Caco-2 (cell line): ENCODE measurements at regions of chr11 and their contacts with region 1.

Region 1: GRCh38 chr11:124793466-124794278 is 6.5 kb downstream of the MSANTD2 start:
- DNase-seq: peak in 1 of 2 experiments; percentile 79
- H3K4me3 ChIP-seq: no peak overlapping the region
- H3K4me3 Mint-ChIP-seq: no peak overlapping the region
- H3K27ac Mint-ChIP-seq: no peak overlapping the region
- H3K4me1 ChIP-seq: peaks cover 5% of the 10 kb centered on the region; the same call in 1 of the 2 replicates
- H3K4me1 Mint-ChIP-seq: peaks cover 24% of the 10 kb centered on the region
- H3K27me3 ChIP-seq: no peaks in the 10 kb centered on the region
- H3K27me3 Mint-ChIP-seq: no peaks in the 10 kb centered on the region
- CTCF ChIP-seq: peak; percentile 85 to 94

Region 2: DNA sequence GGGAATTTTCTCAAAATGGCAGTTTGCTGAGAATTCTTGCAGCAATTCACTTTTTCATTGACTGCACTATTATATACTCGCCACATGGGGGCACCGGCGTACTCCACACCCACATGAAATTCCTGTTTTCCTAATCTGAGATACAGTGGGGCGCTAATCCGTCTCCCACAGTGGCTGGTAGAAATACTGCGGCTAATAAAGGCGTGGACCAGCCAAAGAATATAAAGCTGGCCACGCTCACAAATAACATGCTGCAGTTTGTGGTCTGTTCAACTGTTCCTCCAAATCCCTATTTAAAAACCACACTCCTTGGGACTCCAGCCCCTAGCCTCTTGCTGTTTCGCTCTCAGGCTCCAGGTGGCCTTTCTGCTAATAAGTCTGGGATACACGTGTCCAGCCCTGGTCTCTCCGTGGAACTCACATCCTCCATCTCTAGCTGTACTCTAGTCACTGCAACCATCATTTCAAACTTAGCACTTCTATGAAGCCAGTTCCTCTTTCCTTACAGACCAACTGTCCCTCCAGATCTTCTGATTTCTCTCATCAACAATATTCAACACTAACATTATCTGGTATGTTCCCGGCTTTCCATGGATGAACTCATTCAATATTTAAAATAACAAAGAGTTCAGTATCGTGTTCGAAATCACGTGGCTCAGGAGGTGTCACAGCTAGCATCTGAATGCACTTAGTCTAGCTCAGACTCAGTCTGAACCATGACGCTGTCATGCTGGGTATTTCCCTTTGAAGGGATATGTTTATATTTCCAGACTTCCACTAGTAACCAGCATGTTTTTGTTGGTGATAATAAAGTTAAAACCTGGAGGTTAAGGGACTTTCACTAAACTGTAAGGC is 149.0 kb before region 1 on chr11:
- CTCF ChIA-PET with region 1: interaction called, 3 read pairs
- POLR2A ChIA-PET with region 1: no interaction called
- intact Hi-C with region 1: loop called (anchors 1 kb)
- DNase-seq: peak; percentile 77 to 79
- H3K4me3 ChIP-seq: 0 out of 2 replicates have a peak overlapping the region, but pooled peaks have one; percentile 1
- H3K4me3 Mint-ChIP-seq: peak overlapping the region; percentile 54
- H3K27ac Mint-ChIP-seq: no peak overlapping the region
- H3K4me1 ChIP-seq: no peaks in the 10 kb centered on the region
- H3K4me1 Mint-ChIP-seq: no peaks in the 10 kb centered on the region
- H3K27me3 ChIP-seq: no peaks in the 10 kb centered on the region
- H3K27me3 Mint-ChIP-seq: no peaks in the 10 kb centered on the region
- CTCF ChIP-seq: peak; percentile 92 to 99

Region 3: GRCh38 chr11:124717786-124718651 is 75.7 kb before region 1 on chr11:
- CTCF ChIA-PET with region 1: no interaction called
- POLR2A ChIA-PET with region 1: no interaction called
- intact Hi-C with region 1: no loop called
- DNase-seq: peak in 1 of 2 experiments; percentile 37
- H3K4me3 ChIP-seq: peak overlapping the region; percentile 36
- H3K4me3 Mint-ChIP-seq: peak overlapping the region; percentile 71
- H3K27ac Mint-ChIP-seq: no peak overlapping the region
- H3K4me1 ChIP-seq: peaks cover 4% of the 10 kb centered on the region; the same call in 1 of the 2 replicates
- H3K4me1 Mint-ChIP-seq: no peaks in the 10 kb centered on the region
- H3K27me3 ChIP-seq: peaks cover 6% of the 10 kb centered on the region
- H3K27me3 Mint-ChIP-seq: peaks cover 35% of the 10 kb centered on the region
- CTCF ChIP-seq: no peak

Region 4: DNA sequence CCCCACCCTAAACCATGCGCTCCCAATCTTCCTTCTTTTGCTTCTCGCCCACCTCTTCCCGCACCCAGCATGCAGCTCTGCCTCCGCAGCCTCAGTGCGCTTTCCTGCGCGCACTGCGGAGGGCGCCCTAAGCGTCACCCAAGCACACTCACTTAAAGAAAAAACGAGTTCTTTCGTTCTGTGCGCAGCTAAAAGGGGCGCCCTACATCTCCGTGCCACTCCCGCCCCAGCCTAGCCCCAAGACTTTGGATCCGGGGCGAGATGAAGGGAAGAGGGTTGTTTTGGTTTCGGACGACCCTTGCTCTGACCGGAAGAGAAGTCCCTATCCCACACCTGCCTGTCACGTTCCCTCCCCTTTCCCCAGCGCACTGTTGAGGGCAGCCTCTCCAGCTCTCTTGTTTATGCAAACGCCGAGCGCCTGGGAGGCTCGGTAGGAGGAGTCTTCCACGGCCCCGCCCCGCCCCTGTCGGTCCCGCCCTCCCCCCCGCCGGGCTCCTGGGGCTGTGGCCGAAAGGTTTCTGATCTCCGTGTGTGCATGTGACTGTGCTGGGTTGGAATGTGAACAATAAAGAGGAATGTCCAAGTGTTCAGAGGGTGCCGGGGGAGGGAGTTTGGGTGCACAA is 46.9 kb before region 1 on chr11:
- CTCF ChIA-PET with region 1: interaction called, 16 read pairs
- POLR2A ChIA-PET with region 1: no interaction called
- intact Hi-C with region 1: loop called (anchors 1 kb)
- DNase-seq: peak; percentile 94 to 98
- H3K4me3 ChIP-seq: peak overlapping the region; percentile 57
- H3K4me3 Mint-ChIP-seq: peak overlapping the region; percentile 84
- H3K27ac Mint-ChIP-seq: peak overlapping the region; percentile 60
- H3K4me1 ChIP-seq: peaks cover 25% of the 10 kb centered on the region
- H3K4me1 Mint-ChIP-seq: peaks cover 17% of the 10 kb centered on the region
- H3K27me3 ChIP-seq: peaks cover under 1% of the 10 kb centered on the region; the same call in 1 of the 2 replicates
- H3K27me3 Mint-ChIP-seq: peaks cover 7% of the 10 kb centered on the region
- CTCF ChIP-seq: peak; percentile 75 to 94

Region 5: DNA sequence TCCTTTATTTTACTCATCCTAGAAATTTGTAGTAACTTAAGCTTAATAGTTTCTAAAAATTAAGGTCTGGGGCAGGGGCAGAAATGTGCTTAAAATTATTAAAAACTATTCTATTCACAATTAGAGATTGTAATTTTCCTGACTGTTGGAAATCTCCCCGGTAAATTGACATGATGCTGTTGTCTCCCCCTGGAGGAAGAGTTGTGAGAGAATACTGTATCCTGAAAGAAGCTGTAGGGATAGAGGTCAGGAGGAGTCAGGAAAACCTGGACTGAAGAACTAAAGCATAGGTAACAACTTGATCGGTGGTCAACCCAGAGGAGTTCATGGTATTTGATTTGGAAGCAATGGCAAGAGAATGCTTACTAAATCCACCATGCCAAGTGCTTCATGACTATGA is 15.4 kb before region 1 on chr11:
- CTCF ChIA-PET with region 1: interaction called, 13 read pairs
- POLR2A ChIA-PET with region 1: no interaction called
- intact Hi-C with region 1: loop called (anchors 2 kb)
- DNase-seq: peak in 1 of 2 experiments; percentile 42
- H3K4me3 ChIP-seq: no peak overlapping the region
- H3K4me3 Mint-ChIP-seq: no peak overlapping the region
- H3K27ac Mint-ChIP-seq: no peak overlapping the region
- H3K4me1 ChIP-seq: no peaks in the 10 kb centered on the region
- H3K4me1 Mint-ChIP-seq: peaks cover 7% of the 10 kb centered on the region
- H3K27me3 ChIP-seq: no peaks in the 10 kb centered on the region
- H3K27me3 Mint-ChIP-seq: no peaks in the 10 kb centered on the region
- CTCF ChIP-seq: peak; percentile 62 to 70

Region 6: GRCh38 chr11:124812876-124813275 is 19.2 kb after region 1 on chr11:
- CTCF ChIA-PET with region 1: interaction called, 12 read pairs
- POLR2A ChIA-PET with region 1: no interaction called
- intact Hi-C with region 1: no loop called
- DNase-seq: no peak
- H3K4me3 ChIP-seq: no peak overlapping the region
- H3K4me3 Mint-ChIP-seq: no peak overlapping the region
- H3K27ac Mint-ChIP-seq: no peak overlapping the region
- H3K4me1 ChIP-seq: peaks cover 7% of the 10 kb centered on the region
- H3K4me1 Mint-ChIP-seq: no peaks in the 10 kb centered on the region
- H3K27me3 ChIP-seq: no peaks in the 10 kb centered on the region
- H3K27me3 Mint-ChIP-seq: peaks cover 9% of the 10 kb centered on the region
- CTCF ChIP-seq: no peak

Region 7: DNA sequence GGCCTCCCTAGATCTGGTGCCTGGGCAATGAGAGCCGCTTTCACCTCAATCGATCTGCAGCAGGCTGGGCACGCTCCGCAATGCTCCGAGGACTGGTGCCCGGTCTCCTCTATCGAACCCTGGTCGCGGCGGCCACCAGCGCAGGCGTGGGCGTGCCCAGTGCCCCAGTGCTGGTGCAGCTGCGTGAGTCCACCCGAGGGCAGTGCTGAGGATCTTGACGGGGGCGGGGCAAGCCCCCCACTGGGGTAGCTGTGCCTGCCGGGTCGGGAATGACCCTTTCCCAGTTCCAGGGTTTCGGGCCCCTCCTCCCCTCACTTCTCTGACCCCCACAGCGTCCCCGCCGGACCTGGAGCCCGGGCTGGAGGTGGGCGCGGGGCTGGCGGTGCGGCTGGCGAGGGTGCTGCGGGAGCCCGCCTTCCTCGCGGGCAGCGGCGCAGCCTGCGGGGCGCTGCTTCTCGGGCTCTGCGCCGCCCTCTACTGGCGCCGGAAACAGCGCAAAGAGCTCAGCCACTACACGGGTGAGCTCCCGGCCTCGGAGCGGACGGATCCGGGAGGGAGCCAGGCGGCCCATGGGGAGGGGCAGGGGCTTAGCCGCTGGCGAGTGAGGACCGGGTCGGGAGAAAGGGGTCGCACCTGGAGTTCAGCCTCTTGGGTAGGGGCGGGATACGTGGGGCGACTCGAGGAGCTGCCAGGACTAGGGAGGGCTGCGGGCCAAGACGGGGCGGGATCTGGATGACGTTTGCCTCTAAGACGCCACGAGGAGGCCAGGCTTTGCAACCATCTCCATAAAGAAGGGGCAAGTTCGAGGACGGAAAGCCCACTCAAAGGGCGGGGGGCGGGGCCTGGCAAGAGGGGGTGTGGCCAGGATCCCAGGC is 82.5 kb after region 1 on chr11:
- CTCF ChIA-PET with region 1: interaction called, 11 read pairs
- POLR2A ChIA-PET with region 1: no interaction called
- intact Hi-C with region 1: no loop called
- DNase-seq: peak; percentile 86 to 93
- H3K4me3 ChIP-seq: peak overlapping the region; percentile 62
- H3K4me3 Mint-ChIP-seq: peak overlapping the region; percentile 80
- H3K27ac Mint-ChIP-seq: peak overlapping the region; percentile 83
- H3K4me1 ChIP-seq: 0 out of 2 replicates have a peak, but pooled peaks cover 4% of the 10 kb centered on the region
- H3K4me1 Mint-ChIP-seq: peaks cover 12% of the 10 kb centered on the region
- H3K27me3 ChIP-seq: peaks cover 4% of the 10 kb centered on the region
- H3K27me3 Mint-ChIP-seq: peaks cover 16% of the 10 kb centered on the region
- CTCF ChIP-seq: peak; percentile 92 to 97

Region 8: DNA sequence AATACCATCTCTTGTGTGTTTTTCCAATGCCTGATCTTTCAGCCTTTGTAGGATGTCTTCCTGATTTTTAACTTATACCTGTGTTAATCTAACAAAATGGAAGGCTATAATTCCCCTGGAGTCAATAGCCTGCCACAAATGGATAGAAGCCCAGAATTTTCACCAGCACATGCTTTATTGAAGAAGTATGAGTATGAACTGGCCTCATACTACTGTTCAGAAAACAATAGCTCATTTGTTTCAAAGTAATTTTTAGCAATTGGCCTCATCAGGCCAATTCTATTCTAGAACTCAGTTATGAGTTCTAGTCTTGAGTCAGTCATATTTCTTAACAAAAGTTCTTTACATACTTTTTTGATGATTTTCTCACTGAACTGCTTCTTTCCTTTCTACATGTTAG is 228.9 kb after region 1 on chr11:
- CTCF ChIA-PET with region 1: no interaction called
- POLR2A ChIA-PET with region 1: no interaction called
- intact Hi-C with region 1: no loop called
- DNase-seq: no peak
- H3K4me3 ChIP-seq: no peak overlapping the region
- H3K4me3 Mint-ChIP-seq: no peak overlapping the region
- H3K27ac Mint-ChIP-seq: no peak overlapping the region
- H3K4me1 ChIP-seq: peaks cover 10% of the 10 kb centered on the region
- H3K4me1 Mint-ChIP-seq: peaks cover 8% of the 10 kb centered on the region
- H3K27me3 ChIP-seq: no peaks in the 10 kb centered on the region
- H3K27me3 Mint-ChIP-seq: no peaks in the 10 kb centered on the region
- CTCF ChIP-seq: no peak

Region 9: DNA sequence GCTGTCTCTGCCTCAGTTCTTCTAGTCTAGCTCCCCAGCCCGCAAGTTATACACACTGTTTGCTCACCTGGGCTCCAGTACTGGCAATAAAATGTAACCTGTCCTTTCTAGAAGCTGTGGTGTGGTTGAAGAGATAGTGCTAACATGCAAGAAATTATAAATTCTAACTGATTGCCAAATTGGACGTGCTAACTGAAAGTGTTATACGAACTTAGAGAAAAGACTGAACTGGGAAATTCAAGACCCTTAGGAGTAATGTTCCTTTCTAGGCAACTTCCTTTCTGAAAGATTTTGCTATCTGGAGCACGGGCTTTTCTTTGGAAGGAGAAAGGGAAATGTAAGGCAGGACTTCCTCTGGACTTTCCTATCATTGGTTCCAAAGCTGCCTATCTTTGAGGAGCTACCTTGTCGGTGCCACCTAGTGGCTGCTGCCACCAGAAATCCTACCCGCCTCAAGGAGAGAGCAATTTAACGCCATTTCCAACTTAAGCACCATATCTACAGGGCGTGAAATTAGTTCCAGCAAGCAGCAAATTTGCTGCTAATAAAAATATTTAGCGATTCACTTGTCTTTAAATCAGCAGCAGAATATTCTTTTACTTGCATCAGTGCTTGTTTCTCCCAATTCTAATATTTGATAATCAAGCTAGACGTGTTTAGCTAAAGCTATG is 330.4 kb after region 1 on chr11:
- CTCF ChIA-PET with region 1: no interaction called
- POLR2A ChIA-PET with region 1: no interaction called
- intact Hi-C with region 1: no loop called
- DNase-seq: peak; percentile 74 to 77
- H3K4me3 ChIP-seq: peak overlapping the region; percentile 5
- H3K4me3 Mint-ChIP-seq: peak overlapping the region; percentile 55
- H3K27ac Mint-ChIP-seq: peak overlapping the region; percentile 76
- H3K4me1 ChIP-seq: peaks cover 28% of the 10 kb centered on the region
- H3K4me1 Mint-ChIP-seq: peaks cover 32% of the 10 kb centered on the region
- H3K27me3 ChIP-seq: no peaks in the 10 kb centered on the region
- H3K27me3 Mint-ChIP-seq: peaks cover 5% of the 10 kb centered on the region
- CTCF ChIP-seq: peak; percentile 67 to 80